ENCODE measurements at regions of chr19 and their contacts with region 1.

Region 1: GRCh38 chr19:17305517-17306284 is at the start of gene MRPL34:
- DNase-seq: peak; percentile 94
- H3K4me3 Mint-ChIP-seq: peak within 1 kb of the TSS; percentile 90
- H3K27ac Mint-ChIP-seq: peak within 1 kb of the TSS; percentile 91
- H3K4me1 Mint-ChIP-seq: peaks cover 45% of the 10 kb centered on the region
- H3K27me3 Mint-ChIP-seq: no peaks in the 10 kb centered on the region
- total RNA-seq, gene MRPL34: 108 and 118 TPM in 2 replicates

Region 2: GRCh38 chr19:16495982-16496612 is 809.6 kb before region 1 on chr19 and contains the starts of genes C19orf44 and CALR3:
- intact Hi-C with region 1: loop called (anchors 1 kb)
- DNase-seq: peak; percentile 98
- H3K4me3 Mint-ChIP-seq: peak within 1 kb of the TSS; percentile 93
- H3K27ac Mint-ChIP-seq: peak within 1 kb of the TSS; percentile 87
- H3K4me1 Mint-ChIP-seq: peaks cover 9% of the 10 kb centered on the region
- H3K27me3 Mint-ChIP-seq: no peaks in the 10 kb centered on the region
- total RNA-seq, gene C19orf44: 4.4 and 5.6 TPM in 2 replicates
- total RNA-seq, gene CALR3: not detected in 2 replicates

Region 3: DNA sequence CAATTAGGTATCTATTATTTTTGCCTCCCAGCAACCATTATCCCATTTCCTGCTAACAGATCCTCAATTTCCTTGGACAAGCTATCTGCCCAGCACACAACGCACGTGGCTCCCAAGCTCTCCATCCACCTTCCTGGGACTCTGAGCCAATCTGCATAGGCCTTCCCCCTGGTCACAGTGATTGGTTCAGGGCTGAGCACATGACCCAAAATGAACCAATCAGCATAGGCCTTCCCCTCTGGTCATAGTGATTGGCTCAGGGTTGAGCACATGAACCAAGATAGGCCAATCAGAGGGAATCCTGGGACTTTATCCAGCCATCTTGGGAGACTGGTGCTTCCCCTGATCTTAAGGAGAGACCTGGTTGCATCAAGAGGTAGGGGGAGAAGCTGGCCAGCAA is 284.9 kb before region 1 on chr19:
- intact Hi-C with region 1: no loop called
- DNase-seq: no peak
- H3K4me3 Mint-ChIP-seq: no peak overlapping the region
- H3K27ac Mint-ChIP-seq: no peak overlapping the region
- H3K4me1 Mint-ChIP-seq: peaks cover 2% of the 10 kb centered on the region
- H3K27me3 Mint-ChIP-seq: peaks cover 20% of the 10 kb centered on the region

Region 4: GRCh38 chr19:17255150-17255621 is 50.5 kb before region 1 on chr19:
- intact Hi-C with region 1: no loop called
- DNase-seq: no peak
- H3K4me3 Mint-ChIP-seq: no peak overlapping the region
- H3K27ac Mint-ChIP-seq: no peak overlapping the region
- H3K4me1 Mint-ChIP-seq: no peaks in the 10 kb centered on the region
- H3K27me3 Mint-ChIP-seq: no peaks in the 10 kb centered on the region

Region 5: DNA sequence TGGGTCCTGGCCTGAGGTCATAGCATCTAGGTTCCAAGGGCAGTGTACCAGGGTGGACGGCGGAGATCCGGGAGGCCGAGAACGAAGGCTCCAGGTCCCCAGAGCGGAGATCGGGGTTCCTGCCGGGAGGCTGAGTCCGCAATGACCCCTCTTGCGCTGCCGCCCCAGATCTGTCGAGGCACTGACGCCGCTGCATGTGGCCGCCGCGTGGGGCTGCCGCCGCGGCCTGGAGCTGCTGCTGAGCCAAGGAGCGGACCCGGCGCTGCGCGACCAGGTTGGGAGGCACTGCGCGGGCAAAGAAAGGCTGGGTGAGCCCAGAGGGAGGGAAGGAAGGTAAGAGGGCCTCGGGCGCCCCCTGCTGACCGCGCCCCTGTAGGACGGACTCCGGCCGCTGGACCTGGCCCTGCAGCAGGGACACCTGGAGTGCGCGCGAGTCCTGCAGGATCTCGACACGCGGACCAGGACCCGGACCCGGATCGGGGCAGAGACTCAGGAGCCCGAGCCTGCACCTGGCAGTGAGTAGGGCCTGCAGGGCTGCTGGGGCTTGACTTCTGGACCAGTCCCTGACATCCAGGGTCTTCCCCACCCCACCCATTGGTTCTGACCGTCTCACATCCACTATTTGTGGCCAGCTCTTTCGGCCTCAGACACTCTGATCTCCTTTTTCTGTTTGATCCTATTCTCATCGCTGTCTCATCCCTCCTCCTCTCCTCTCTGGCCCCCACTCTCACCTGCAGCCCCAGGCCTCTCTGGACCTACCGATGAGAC is 23.0 kb before region 1 on chr19:
- intact Hi-C with region 1: loop called (anchors 1 kb)
- DNase-seq: peak; percentile 72
- H3K4me3 Mint-ChIP-seq: peak overlapping the region; percentile 89
- H3K27ac Mint-ChIP-seq: peak overlapping the region; percentile 58
- H3K4me1 Mint-ChIP-seq: peaks cover 4% of the 10 kb centered on the region
- H3K27me3 Mint-ChIP-seq: no peaks in the 10 kb centered on the region

Region 6: GRCh38 chr19:17336872-17337722 is 31.4 kb after region 1 on chr19 and contains the start of gene GTPBP3:
- intact Hi-C with region 1: loop called (anchors 1 kb)
- DNase-seq: peak; percentile 95
- H3K4me3 Mint-ChIP-seq: peak within 1 kb of the TSS; percentile 87
- H3K27ac Mint-ChIP-seq: peak within 1 kb of the TSS; percentile 88
- H3K4me1 Mint-ChIP-seq: peaks cover 21% of the 10 kb centered on the region
- H3K27me3 Mint-ChIP-seq: peaks cover 2% of the 10 kb centered on the region
- total RNA-seq, gene GTPBP3: 64.2 and 72.0 TPM in 2 replicates

Region 7: GRCh38 chr19:17511724-17512573 is 206.2 kb after region 1 on chr19:
- intact Hi-C with region 1: loop called (anchors 5 kb)
- DNase-seq: peak; percentile 75
- H3K4me3 Mint-ChIP-seq: peak overlapping the region; percentile 99
- H3K27ac Mint-ChIP-seq: peak overlapping the region; percentile 79
- H3K4me1 Mint-ChIP-seq: peaks cover 28% of the 10 kb centered on the region
- H3K27me3 Mint-ChIP-seq: no peaks in the 10 kb centered on the region